ENCODE measurements at regions of chr19 and their contacts with region 1.

Region 1: DNA sequence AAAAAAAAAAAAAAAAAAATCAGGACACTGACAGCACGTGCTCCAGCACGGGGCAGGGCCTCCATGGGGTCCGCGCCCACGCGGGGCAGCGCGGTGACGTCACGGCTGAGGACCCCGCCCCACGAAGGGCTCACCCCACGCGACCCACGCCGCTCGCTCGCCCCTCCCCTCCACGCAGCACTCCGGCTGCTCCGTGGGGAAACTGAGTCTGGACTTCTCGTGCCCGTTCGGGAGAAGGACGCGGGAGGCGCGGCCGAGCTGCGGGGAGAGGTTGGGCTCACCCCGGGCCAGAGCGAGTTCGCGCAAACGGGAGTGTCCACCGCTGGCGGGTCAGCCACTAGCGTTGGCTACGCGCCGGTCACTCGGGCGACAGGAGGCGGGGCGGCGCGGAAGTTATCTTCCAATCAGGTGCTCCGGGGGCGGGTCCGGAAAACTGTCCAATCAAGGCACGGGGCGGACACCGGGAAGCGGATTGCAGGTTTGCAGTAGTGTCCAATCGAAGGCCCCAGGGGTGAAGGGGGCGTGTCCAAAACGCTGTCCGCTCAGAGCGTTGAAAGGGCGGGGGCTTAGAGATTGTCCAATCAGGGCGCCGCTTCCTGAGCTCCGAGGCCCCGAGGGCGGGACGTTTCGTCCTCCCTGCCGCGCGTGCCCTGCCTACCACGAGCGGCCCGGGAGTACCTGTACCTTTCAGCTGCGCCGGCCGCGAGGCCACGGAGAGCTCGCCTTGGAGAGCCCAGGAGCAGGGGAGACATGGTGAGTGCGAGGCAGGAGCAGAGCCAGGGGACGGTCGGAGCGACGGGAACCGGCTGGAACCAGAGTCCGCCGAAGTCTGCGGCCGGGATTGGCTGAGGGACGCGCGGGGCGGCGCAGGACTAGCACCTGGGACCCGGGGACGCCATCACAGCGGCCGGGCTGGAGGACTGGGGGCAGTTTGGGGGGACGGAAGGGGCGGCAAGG is at the start of gene ZNF57:
- DNase-seq: peak; percentile 100
- ATAC-seq: peak; percentile 98
- H3K4me3 Mint-ChIP-seq: peak within 1 kb of the TSS; percentile 97
- H3K27ac Mint-ChIP-seq: peak within 1 kb of the TSS; percentile 94
- H3K4me1 Mint-ChIP-seq: peaks cover 10% of the 10 kb centered on the region
- H3K27me3 Mint-ChIP-seq: peaks cover 15% of the 10 kb centered on the region
- CTCF ChIP-seq: no peak
- total RNA-seq, gene ZNF57: 6.7 to 8.9 TPM (median 6.8 TPM) in 3 replicates

Region 2: GRCh38 chr19:2887391-2887914 is 13.1 kb before region 1 on chr19:
- CTCF ChIA-PET with region 1: interaction called, 21 read pairs
- POLR2A ChIA-PET with region 1: interaction called, 3 read pairs
- DNase-seq: no peak
- ATAC-seq: peak; percentile 95
- H3K4me3 Mint-ChIP-seq: no peak overlapping the region
- H3K27ac Mint-ChIP-seq: peak overlapping the region; percentile 28
- H3K4me1 Mint-ChIP-seq: peaks cover 8% of the 10 kb centered on the region
- H3K27me3 Mint-ChIP-seq: no peaks in the 10 kb centered on the region; the same call in 1 of the 2 replicates
- CTCF ChIP-seq: peak; percentile 25

Region 3: DNA sequence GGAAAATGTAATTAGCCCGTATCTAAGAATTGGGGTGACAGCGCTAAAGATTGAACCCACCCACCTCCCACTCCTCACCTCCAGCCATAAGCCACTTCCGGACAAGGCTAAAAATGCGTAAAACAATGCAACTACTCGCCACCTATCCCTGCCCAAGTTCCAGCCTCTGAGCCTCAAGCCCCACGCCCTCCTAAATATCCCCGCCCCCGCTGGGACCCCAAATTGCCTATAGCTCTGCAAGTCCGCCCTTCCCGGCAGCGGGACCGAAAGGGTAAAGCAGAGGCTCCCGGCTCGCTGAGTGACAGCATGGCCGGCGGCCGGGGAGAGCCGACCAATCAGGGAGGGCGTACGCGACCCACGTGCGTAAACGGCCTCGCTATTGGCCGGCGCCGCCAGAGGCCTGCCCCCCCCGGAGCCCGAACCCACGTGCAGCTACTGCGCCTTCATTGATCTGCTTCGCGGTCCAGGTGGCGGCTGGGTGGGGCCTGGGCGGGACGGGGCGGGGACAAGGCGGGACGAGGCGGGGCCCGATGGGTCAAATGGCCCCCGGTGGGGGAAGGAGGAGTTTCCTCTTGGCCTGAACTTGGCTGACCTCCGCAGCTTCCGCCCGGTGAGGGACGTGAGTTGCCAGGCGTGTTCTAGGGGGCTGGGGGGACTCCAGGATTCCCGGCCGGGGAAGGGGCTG is 76.6 kb after region 1 on chr19 and contains the start of gene TLE6:
- CTCF ChIA-PET with region 1: no interaction called
- POLR2A ChIA-PET with region 1: no interaction called
- DNase-seq: peak; percentile 99
- ATAC-seq: peak; percentile 86
- H3K4me3 Mint-ChIP-seq: peak within 1 kb of the TSS; percentile 71
- H3K27ac Mint-ChIP-seq: no peak within 1 kb of the TSS
- H3K4me1 Mint-ChIP-seq: peaks cover 27% of the 10 kb centered on the region
- H3K27me3 Mint-ChIP-seq: peaks cover 58% of the 10 kb centered on the region
- CTCF ChIP-seq: no peak
- total RNA-seq, gene TLE6: 2.5 to 3.3 TPM (median 3.1 TPM) in 3 replicates

Measured in WTC11 (cell line).